ENCODE measurements at regions of chr16 and their contacts with region 1.

Region 1: DNA sequence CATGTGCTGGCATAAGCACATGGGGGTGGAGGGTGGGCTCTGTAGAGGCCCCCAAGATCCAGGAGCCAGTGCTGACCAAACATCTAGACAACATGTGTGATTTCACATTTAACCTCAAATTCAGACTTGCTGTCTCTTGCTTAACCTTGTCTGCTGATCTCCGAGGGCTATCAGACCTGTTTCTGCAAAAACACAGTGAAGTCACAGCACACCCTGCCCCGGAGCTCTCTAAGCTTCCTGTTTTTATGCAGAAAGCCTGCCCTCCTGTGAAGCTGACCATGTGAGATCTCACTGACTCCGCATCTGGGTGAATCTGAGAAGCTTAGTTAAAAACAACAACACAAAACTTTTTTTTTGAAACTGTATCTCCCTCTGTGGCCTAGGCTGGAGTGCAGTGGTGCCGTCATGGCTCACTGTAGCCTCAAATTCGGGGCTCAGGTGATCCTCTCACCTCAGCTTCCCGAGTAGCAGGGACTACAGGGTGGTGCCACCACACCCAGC is 6.6 kb upstream of the DPEP2 start:
- DNase-seq: no peak
- ATAC-seq: peak; percentile 66
- H3K4me3 Mint-ChIP-seq: no peak overlapping the region
- H3K27ac Mint-ChIP-seq: peak overlapping the region; percentile 48
- H3K4me1 Mint-ChIP-seq: peaks cover 14% of the 10 kb centered on the region
- H3K27me3 Mint-ChIP-seq: no peaks in the 10 kb centered on the region; the same call in 1 of the 2 replicates
- CTCF ChIP-seq: no peak

Region 2: DNA sequence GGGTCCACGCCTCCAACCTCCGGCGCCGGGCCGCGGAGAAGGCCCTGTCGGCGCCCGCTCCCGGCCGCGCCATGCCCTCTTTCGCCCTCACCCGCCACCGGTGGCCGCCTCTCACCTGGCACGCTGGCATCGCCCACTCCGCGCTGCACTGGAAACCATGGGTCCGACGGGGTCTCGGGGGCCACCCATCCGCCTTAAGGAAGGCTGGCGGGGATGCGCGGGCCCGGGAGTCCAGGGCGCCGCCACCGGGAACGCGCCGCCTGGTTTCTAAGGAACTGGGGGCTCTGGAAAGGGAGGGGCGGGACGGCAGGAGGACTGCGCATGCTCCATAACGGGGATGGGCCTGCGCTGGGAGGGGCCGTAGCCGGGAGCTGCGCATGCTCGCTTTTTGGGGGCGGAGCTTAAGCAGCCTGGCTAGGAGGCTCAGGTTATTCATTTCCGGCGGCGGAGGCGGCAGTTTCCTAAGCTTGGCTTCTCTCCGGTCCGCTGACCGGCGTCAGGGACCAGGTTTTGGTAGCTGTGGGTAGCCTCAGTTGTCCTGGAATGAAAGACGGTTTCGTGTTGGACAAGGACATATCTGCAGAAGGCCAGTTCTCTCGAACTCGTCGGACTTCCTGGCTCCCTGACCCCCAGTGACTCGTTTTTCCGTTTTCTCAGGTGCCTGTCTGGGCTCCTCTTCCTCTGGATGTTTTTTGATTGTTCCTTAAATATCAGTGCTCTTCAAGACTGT is 286.6 kb before region 1 on chr16 and contains the start of gene GFOD2:
- CTCF ChIA-PET with region 1: no interaction called
- POLR2A ChIA-PET with region 1: no interaction called
- DNase-seq: peak; percentile 99
- ATAC-seq: peak; percentile 94
- H3K4me3 Mint-ChIP-seq: peak within 1 kb of the TSS; percentile 91
- H3K27ac Mint-ChIP-seq: peak within 1 kb of the TSS; percentile 82
- H3K4me1 Mint-ChIP-seq: peaks cover 21% of the 10 kb centered on the region
- H3K27me3 Mint-ChIP-seq: no peaks in the 10 kb centered on the region
- CTCF ChIP-seq: no peak
- total RNA-seq, gene GFOD2: 19.3 to 29.5 TPM (median 22.8 TPM) in 3 replicates

Region 3: DNA sequence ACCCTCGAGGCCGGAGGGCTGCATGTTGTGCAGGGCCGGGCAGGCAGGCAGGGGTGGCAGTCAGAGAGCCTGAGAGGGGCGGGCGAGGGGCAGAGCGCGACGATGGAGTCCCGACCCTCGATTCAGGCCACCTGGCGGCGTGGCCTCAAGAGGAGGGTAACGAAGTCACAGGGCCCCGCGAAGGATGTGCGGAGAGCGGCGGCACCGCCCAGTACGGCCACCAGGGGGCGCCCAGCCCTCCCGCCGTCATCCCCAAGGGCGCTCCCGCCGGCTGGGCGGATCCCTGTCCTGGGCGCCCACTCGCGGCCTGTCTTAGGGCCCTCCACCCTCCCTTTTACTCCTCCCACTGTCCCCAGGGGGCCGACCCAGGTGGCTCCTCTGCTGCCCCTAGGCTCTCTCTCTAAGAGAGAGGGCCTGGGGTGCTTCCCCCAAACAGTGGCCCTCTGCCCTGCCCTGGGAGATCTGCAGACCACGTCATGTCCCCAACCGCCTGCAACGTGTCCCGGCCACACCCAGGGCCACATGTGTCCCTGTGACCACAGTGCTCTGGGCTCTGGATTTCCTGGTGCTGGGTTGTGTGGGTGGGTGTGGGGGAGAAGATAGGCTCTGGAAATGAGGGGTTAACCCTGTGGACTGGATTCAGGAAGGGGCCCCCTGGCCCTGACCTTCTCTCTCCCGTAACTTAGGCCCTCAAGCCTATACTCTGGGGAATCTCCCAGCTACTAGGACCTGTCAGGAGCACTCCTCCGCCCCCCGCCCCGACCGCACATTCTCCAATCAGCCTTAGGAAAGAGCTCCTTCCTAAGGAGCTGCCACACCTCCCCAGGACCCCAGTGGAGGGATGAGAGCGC is 12.4 kb before region 1 on chr16:
- CTCF ChIA-PET with region 1: interaction called, 17 read pairs
- POLR2A ChIA-PET with region 1: interaction called, 6 read pairs
- DNase-seq: peak; percentile 83
- ATAC-seq: peak; percentile 89
- H3K4me3 Mint-ChIP-seq: no peak overlapping the region
- H3K27ac Mint-ChIP-seq: no peak overlapping the region
- H3K4me1 Mint-ChIP-seq: no peaks in the 10 kb centered on the region
- H3K27me3 Mint-ChIP-seq: peaks cover 20% of the 10 kb centered on the region
- CTCF ChIP-seq: peak; percentile 100

Measured in WTC11 (cell line).